Heart left ventricle (tissue), 16 donors: ENCODE measurements at regions of chr1 and their contacts with region 1.

Region 1: GRCh38 chr1:6028042-6028850 is 17.4 kb upstream of the KCNAB2 start:
- DNase-seq: peak in 1 of 5 donors; percentile 38
- ATAC-seq: peak in 2 of 4 donors; percentile 44 to 45
- H3K4me3 ChIP-seq: peak overlapping the region in 2 of 12 donors; percentile 51 to 66
- H3K27ac ChIP-seq: peak overlapping the region in 2 of 12 donors; percentile 82 to 89
- H3K4me1 ChIP-seq: peaks cover 0 to 44% (median 11%) of the 10 kb centered on the region in 12 donors
- H3K27me3 ChIP-seq: peaks cover 0 to 8% (median 0%) of the 10 kb centered on the region in 9 donors
- CTCF ChIP-seq: no peak
- POLR2A ChIP-seq: no peak

Region 2: DNA sequence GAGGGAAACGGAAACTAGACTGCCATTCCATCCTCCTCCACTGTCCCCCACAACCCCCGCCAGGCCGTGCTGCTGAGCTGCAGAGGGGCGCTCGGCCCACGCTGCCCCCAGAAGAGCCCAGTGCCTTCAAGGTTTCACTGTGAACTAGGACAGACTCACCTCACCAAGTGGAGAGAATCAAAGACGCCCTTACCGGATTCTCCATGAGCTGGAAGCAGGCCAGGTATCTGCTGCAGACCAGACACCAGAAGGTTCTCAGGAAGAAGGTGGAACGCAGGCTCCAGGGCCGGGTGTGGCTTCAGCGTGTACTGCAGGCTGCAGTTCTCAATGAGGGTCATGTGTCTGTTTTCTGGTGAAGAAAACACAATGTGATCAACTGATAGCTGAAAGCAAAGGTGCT is 66.6 kb before region 1 on chr1:
- intact Hi-C with region 1: no loop called
- DNase-seq: peak in 1 of 5 donors; percentile 18
- ATAC-seq: no peak
- H3K4me3 ChIP-seq: no peak overlapping the region
- H3K27ac ChIP-seq: no peak overlapping the region
- H3K4me1 ChIP-seq: no peaks in the 10 kb centered on the region
- H3K27me3 ChIP-seq: no peaks in the 10 kb centered on the region
- CTCF ChIP-seq: no peak
- POLR2A ChIP-seq: no peak

Region 3: GRCh38 chr1:6016191-6016865 is 11.9 kb before region 1 on chr1:
- intact Hi-C with region 1: loop called in 1 of 10 experiments (anchors 1 kb)
- DNase-seq: peak in 2 of 5 donors; percentile 44 to 68
- ATAC-seq: peak in 2 of 4 donors; percentile 9 to 33
- H3K4me3 ChIP-seq: no peak overlapping the region
- H3K27ac ChIP-seq: peak overlapping the region in 3 of 12 donors; percentile 3 to 90 (median 89)
- H3K4me1 ChIP-seq: peaks cover 0 to 34% (median 17%) of the 10 kb centered on the region in 12 donors
- H3K27me3 ChIP-seq: no peaks in the 10 kb centered on the region
- CTCF ChIP-seq: no peak
- POLR2A ChIP-seq: no peak